ENCODE measurements at regions of chr7 and their contacts with region 1.

Region 1: DNA sequence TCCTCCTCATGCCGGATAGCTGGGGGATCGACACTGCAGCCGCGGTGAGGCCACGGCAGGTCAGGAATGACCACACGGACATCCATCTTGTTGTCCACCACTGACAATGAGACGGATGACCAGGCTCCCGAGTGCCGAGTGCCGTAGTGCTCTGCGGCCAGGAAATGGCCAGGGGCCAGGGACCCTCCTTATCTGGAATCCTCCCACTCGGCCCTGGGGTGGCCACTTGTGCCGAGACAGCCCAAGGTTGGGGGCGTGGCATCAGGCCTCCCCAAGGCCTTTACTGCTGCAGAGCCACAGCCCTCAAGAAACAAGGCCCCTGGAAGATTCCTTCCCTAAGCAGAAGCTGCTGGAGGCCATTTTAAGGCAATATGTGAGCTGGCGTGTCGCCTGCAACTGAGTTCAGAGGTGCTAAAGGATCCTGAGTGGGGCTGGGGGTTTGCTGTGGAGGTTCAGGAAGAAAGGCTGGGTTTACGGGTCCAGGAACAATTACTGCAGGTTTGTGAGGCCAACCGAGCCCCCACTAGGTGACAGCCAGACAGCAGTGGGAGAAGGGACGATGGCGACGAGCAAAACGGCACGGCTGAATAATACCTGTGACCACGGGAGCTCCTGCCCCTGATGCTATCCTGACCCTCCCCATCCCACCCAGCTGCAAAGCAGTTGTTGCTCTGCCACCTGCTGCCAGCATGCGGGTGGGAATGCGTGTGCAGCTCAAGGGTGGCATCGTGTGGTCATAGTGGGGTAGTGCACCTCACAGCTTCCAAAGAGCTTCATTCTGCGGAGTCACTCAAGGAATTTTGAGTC is 31.6 kb upstream of the LEP start:
- DNase-seq: peak; percentile 78
- H3K4me3 Mint-ChIP-seq: no peak overlapping the region
- H3K27ac Mint-ChIP-seq: no peak overlapping the region
- H3K4me1 Mint-ChIP-seq: no peaks in the 10 kb centered on the region
- H3K27me3 Mint-ChIP-seq: peaks cover 12% of the 10 kb centered on the region

Region 2: GRCh38 chr7:127585044-127585953 is 624.1 kb before region 1 on chr7 and contains the start of gene GCC1:
- CTCF ChIA-PET with region 1: no interaction called
- POLR2A ChIA-PET with region 1: no interaction called
- intact Hi-C with region 1: loop called (anchors 10 kb)
- DNase-seq: peak; percentile 96
- H3K4me3 Mint-ChIP-seq: peak within 1 kb of the TSS; percentile 88
- H3K27ac Mint-ChIP-seq: peak within 1 kb of the TSS; percentile 64
- H3K4me1 Mint-ChIP-seq: peaks cover 69% of the 10 kb centered on the region
- H3K27me3 Mint-ChIP-seq: no peaks in the 10 kb centered on the region
- total RNA-seq, gene GCC1: 14.1 to 15.0 TPM

Region 3: GRCh38 chr7:127717502-127718339 is 491.7 kb before region 1 on chr7:
- CTCF ChIA-PET with region 1: interaction called, 126 read pairs
- POLR2A ChIA-PET with region 1: no interaction called
- intact Hi-C with region 1: no loop called
- DNase-seq: no peak
- H3K4me3 Mint-ChIP-seq: no peak overlapping the region
- H3K27ac Mint-ChIP-seq: peak overlapping the region; percentile 7
- H3K4me1 Mint-ChIP-seq: peaks cover 25% of the 10 kb centered on the region
- H3K27me3 Mint-ChIP-seq: no peaks in the 10 kb centered on the region

Region 4: DNA sequence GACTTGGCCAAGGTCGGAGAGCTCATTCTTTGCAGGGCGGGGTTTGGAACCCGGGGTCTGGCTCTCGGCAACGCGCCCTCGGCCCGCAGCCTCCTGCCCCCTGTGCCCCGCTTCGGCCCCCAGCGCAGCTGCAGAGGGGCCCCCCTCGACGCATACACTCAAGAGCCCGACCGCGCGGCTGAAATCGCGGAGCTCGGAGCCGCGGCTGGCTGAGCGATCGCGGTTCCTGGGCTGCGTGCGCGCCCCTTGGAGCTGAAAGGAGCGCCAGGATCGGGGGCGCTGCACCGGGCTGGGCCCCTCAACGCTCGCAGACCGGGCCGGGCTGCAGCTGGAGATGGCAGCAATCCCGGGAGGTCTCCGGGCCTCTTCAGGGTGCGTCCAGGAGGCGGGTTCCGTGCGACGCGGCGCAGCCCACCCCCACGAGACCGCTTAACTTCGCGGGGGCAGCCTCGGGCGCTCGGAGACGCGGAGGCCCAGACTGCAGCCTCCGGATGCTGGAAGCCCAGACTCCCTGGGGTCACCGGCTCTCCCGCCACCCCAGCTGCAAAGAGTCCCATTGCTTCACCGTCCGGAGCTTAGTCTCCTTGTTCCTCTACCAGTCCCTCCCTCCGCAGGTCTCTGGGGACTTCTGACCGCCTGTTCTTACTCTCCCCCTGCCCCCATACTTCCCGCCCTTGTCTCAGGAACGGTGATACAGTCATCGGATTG is 105.2 kb before region 1 on chr7:
- CTCF ChIA-PET with region 1: interaction called, 18 read pairs
- POLR2A ChIA-PET with region 1: no interaction called
- intact Hi-C with region 1: no loop called
- DNase-seq: peak; percentile 23
- H3K4me3 Mint-ChIP-seq: peak overlapping the region; percentile 75
- H3K27ac Mint-ChIP-seq: no peak overlapping the region
- H3K4me1 Mint-ChIP-seq: peaks cover 38% of the 10 kb centered on the region
- H3K27me3 Mint-ChIP-seq: peaks cover 3% of the 10 kb centered on the region

Region 5: DNA sequence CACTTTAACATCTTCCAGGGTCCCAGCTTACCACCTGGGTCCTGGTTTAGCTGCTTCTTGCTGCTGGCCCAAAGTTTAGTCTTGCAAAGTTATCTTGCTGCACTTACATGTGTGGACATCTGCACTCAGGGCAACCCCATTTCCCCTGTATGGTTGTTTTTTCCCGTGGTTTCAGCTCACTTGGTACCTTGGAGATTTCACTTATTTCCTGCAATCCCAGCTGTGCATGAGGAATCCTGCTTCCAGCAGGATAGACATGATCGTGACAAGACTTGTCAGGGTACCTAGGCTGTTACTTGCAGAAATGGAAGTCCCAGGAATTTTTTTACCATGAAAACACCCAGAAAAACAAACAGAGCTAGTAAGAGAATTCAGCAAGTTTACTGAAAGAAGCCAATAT is 64.2 kb before region 1 on chr7:
- CTCF ChIA-PET with region 1: interaction called, 17 read pairs
- POLR2A ChIA-PET with region 1: no interaction called
- intact Hi-C with region 1: no loop called
- DNase-seq: no peak
- H3K4me3 Mint-ChIP-seq: no peak overlapping the region
- H3K27ac Mint-ChIP-seq: no peak overlapping the region
- H3K4me1 Mint-ChIP-seq: no peaks in the 10 kb centered on the region
- H3K27me3 Mint-ChIP-seq: peaks cover 11% of the 10 kb centered on the region

Region 6: DNA sequence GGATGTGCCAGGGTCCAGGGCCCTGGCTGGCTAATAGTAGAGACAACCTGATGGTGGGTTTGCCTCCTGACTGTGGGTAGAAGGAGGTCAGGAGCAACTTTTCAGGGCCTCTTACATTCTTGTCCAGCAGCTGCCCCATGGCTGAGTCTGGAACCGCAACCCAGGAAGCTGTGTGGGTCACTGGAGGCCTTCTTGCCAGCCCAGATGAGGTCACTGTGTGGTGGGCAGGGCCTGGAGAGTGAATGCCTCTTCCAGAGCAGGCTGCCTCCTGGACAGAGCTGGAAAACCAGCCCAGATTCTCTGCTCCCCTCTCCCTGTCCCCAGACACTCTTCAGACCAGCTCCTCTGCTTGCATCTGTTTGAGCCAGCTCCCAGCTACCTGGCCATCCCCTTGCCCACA is 11.8 kb before region 1 on chr7:
- CTCF ChIA-PET with region 1: interaction called, 10 read pairs
- POLR2A ChIA-PET with region 1: no interaction called
- intact Hi-C with region 1: no loop called
- DNase-seq: peak; percentile 2
- H3K4me3 Mint-ChIP-seq: no peak overlapping the region
- H3K27ac Mint-ChIP-seq: no peak overlapping the region
- H3K4me1 Mint-ChIP-seq: peaks cover 12% of the 10 kb centered on the region
- H3K27me3 Mint-ChIP-seq: peaks cover 23% of the 10 kb centered on the region